ENCODE measurements at regions of chr5 and their contacts with region 1.

Region 1: DNA sequence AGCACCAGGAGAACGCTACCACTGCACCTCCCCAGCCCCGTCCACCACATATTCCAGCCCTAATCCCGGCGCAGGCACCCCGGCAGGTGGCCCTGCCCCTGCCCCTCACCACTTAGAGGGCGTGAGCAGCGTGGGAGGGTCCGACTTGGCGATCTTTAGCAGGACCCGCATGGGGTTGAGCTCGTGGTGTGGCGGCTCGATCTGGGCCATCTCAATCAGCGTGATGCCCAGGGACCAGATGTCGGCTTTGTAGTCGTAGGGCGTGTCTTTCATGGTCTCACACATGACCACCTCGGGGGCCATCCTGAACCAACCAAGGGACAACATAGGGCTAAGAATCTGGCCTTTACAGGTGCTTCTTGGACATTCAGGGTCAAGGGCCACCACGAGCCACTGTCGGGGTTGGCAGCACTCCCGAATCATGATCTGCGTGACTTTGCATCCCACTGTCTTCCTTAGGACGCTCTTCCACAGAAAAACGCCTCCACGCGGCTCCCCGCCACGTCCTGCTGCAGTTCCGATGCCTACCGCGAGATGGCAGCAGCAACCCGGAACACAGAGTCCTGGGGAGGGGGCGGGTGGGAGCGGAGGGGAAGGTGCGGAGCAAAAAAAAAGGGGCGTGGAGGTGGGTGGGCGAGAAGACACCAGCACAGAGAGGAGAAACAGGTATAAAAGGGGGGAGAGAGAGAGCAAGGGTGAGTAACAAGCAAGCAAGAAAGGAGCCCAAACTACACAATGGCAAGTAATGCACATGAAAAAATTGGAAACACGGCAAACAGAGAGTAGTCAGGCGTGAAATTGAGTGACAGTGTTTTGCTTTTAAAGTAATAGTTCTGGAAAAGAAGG is 81.3 kb downstream of the STK10 start:
- DNase-seq: peak; percentile 78
- H3K4me3 ChIP-seq: peak overlapping the region; percentile 28 to 43 (median 36)
- H3K27ac ChIP-seq: peak overlapping the region; percentile 24 to 70 (median 57)
- H3K4me1 ChIP-seq: peaks cover 0 to 62% (median 53%) of the 10 kb centered on the region in 4 donors
- H3K27me3 ChIP-seq: no peaks in the 10 kb centered on the region
- CTCF ChIP-seq: peak; percentile 62 to 98 (median 90)
- EP300 ChIP-seq: no peak
- POLR2A ChIP-seq: no peak

Region 2: GRCh38 chr5:172052450-172053236 is 54.1 kb before region 1 on chr5:
- intact Hi-C with region 1: loop called (anchors 5 kb)
- DNase-seq: peak; percentile 83
- H3K4me3 ChIP-seq: no peak overlapping the region
- H3K27ac ChIP-seq: peak overlapping the region; percentile 32 to 73 (median 61)
- H3K4me1 ChIP-seq: peaks cover 0 to 16% (median 13%) of the 10 kb centered on the region in 4 donors
- H3K27me3 ChIP-seq: no peaks in the 10 kb centered on the region
- CTCF ChIP-seq: peak in 1 of 4 experiments; percentile 25
- EP300 ChIP-seq: no peak
- POLR2A ChIP-seq: no peak

Measured in sigmoid colon (tissue), 7 donors.